AG04449 (cell line): ENCODE measurements at regions of chr11 and their contacts with region 1.

Region 1: DNA sequence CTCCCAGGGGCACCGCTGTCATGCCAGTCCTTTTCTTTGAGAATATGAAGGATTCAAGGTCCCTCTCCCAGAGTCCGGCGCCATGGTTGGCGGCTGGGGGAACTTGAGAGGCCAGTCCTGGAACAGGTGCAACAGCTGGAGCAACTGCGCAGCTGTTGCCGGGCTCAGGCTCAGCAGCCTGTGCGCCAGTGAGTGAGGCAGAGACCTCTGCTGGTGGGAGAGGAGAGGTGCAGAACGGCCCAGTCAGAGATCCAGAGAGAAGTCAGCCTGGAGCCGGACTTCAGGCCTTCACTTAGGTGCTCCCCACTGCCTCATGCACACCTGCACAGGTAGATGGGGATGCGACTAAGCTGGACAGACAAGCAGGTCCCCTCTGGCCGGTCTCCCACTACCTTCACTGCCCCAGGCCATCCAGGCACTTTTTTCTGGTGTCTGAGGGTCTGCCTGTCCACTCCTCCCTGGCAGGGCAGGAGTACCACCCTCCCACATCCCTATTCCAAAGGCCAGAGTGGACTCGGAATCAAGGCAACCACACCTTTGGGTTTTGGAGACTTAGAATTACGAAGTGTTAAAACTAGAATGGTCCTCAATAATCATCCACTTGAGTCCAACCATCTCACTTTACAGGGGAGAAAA is 4.6 kb downstream of the CHRDL2 start:
- DNase-seq: no peak
- H3K4me3 ChIP-seq: no peak overlapping the region
- CTCF ChIP-seq: peak; percentile 98

Region 2: GRCh38 chr11:74570266-74571061 is 156.2 kb before region 1 on chr11:
- CTCF ChIA-PET with region 1: interaction called, 11 read pairs
- POLR2A ChIA-PET with region 1: no interaction called
- DNase-seq: no peak
- H3K4me3 ChIP-seq: no peak overlapping the region
- CTCF ChIP-seq: peak; percentile 62

Region 3: DNA sequence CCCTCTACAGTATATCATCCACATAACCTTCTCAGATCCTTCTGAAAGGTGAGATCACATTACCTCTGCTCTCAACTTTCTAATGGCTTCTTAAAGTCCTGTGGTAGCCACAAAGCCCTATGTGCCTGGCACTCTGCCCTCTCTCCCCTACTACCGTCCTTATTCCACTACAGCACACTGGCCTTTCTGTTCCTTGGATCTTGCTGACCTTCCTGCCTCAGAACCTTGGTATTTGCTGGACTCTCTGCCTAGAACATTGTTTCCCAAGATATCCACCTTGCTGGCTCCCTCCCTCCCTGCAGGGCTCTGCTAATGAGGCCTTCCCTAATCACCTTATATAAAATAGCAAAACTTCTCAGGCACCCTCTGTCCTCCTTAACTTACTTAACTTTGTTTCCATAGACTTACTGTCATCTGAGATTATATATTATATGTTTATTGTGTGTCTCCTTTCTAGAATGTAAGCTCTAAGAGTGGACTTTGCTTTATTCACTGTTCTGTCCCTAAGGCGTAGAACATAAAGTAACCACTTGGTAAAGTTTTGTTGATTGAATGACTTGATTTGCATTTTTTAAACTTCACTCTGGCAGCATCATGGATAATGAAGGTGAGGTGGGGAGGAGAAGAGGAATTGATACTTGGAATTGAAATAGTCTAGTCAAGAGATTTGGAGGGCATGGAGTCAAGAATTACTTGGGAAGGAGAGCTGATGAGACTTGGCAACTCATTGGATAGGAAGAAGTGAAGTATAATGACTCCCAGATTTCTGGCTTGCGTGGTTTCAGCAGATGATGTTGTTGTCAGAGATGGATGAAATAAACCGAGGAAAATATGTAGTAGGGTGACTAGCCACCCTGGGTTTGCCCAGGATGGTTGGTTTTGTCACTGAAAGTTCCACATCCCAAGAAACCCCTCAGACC is 123.8 kb before region 1 on chr11:
- CTCF ChIA-PET with region 1: interaction called, 116 read pairs
- POLR2A ChIA-PET with region 1: no interaction called
- DNase-seq: no peak
- H3K4me3 ChIP-seq: no peak overlapping the region
- CTCF ChIP-seq: no peak

Region 4: GRCh38 chr11:74620531-74620930 is 106.1 kb before region 1 on chr11:
- CTCF ChIA-PET with region 1: interaction called, 18 read pairs
- POLR2A ChIA-PET with region 1: no interaction called
- DNase-seq: peak; percentile 36
- H3K4me3 ChIP-seq: no peak overlapping the region
- CTCF ChIP-seq: no peak

Region 5: GRCh38 chr11:74662487-74663103 is 64.1 kb before region 1 on chr11:
- CTCF ChIA-PET with region 1: no interaction called
- POLR2A ChIA-PET with region 1: no interaction called
- DNase-seq: no peak
- H3K4me3 ChIP-seq: no peak overlapping the region
- CTCF ChIP-seq: no peak

Region 6: GRCh38 chr11:74683279-74683871 is 43.3 kb before region 1 on chr11:
- CTCF ChIA-PET with region 1: interaction called, 21 read pairs
- POLR2A ChIA-PET with region 1: no interaction called
- DNase-seq: no peak
- H3K4me3 ChIP-seq: peak overlapping the region; percentile 25
- CTCF ChIP-seq: peak; percentile 59

Region 7: GRCh38 chr11:74710281-74710938 is 16.3 kb before region 1 on chr11:
- CTCF ChIA-PET with region 1: interaction called, 305 read pairs
- POLR2A ChIA-PET with region 1: no interaction called
- DNase-seq: no peak
- H3K4me3 ChIP-seq: no peak overlapping the region
- CTCF ChIP-seq: no peak

Region 8: GRCh38 chr11:74748211-74749127 is 21.8 kb after region 1 on chr11 and contains the start of gene RNF169:
- CTCF ChIA-PET with region 1: interaction called, 19 read pairs
- POLR2A ChIA-PET with region 1: no interaction called
- DNase-seq: peak; percentile 79
- H3K4me3 ChIP-seq: peak within 1 kb of the TSS; percentile 73
- CTCF ChIP-seq: no peak

Region 9: DNA sequence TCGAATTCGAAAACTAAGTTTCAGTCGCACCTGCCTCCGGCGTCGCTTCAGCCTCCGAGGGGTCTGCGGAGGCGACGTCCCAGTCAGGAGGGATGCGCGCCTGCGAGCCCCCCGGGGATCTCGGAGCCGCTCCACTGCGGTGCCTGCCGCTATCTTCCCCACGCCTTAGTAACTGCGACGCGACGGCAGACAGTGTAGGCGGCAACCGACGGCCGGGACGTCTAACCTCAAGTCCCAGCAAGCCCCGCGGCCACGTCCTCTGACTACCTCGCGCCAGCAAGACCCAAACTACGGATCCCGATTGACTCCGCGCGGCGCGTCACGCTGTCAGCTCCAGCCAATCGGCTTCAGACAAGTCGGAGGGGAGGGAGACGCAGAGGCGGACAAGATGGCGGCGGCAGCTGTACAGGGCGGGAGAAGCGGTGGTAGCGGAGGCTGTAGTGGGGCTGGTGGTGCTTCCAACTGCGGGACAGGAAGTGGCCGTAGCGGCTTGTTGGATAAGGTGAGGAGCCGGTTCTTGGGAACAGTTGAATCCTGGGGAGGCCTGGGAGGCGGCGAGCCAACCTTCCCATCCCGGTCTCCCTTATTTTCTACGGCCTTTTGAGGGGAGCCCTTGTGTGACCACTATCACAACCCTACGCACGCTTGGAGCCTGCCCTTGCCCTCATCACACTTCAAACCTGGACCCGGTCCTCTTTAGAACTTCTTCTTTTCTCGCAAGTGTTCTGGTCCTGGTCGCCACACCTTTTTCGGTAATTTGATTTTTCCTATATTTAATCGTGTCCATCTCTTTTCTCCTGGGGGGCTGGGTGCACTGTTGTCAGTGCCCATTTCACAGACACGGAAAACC is 222.5 kb after region 1 on chr11 and contains the starts of genes SPCS2 and XRRA1:
- CTCF ChIA-PET with region 1: no interaction called
- POLR2A ChIA-PET with region 1: no interaction called
- DNase-seq: peak; percentile 91
- H3K4me3 ChIP-seq: peak within 1 kb of the TSS; percentile 92
- CTCF ChIP-seq: no peak